ENCODE measurements at regions of chr15 and their contacts with region 1.

Region 1: DNA sequence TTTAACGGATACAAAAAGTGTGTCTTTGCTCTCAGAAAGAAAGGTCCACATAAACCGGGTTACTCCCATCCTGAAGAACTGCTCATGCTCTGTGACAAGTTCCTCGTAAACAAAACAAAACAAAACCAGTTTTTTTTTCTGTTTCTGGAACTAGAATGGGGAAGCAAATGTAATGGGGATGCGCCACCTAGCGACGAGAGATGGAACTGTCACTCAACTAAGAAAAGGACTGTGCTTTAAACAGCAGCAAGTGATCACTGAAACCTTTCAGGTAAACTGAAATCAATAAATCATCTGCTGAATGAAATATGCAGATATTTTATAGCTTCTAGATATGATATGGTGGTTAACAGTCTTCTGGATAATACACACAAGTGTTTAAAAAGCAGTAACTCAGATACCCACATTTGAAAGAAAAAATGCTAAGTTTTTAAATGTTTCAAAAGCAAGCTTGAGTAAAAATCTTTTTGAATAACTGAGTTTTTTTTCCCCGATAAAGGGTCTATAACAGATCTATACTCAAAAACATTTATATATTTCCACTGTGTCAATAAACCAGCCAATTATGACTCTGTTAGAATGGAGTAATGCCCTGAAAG is 10.9 kb downstream of the TM2D3 start:
- DNase-seq: peak; percentile 70 to 82
- ATAC-seq: peak; percentile 86
- H3K4me3 ChIP-seq: no peak overlapping the region
- H3K27ac ChIP-seq: no peak overlapping the region
- H3K4me1 ChIP-seq: no peaks in the 10 kb centered on the region
- H3K27me3 ChIP-seq: no peaks in the 10 kb centered on the region

Region 2: DNA sequence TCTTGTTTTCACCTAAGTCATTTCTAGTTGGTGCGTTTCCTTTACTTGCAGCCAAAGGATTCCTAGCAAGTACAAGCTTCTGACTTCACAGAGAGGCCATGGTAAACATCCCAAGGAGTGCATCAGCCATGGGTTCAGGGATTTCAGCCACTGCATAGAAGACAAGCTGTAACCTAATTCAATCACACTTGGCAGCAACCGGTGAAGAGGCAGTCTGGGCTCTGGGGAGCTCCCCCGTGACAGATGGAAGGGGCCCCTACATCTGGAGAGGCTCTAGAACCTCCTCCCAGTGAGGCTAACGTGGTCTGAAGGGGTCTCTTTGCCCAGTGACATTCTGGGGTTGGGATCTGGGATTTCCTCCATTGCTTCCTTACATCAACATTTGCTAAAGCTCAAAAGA is 337.9 kb before region 1 on chr15:
- intact Hi-C with region 1: loop called in 1 of 2 experiments (anchors 5 kb)
- DNase-seq: no peak
- ATAC-seq: no peak
- H3K4me3 ChIP-seq: no peak overlapping the region
- H3K27ac ChIP-seq: no peak overlapping the region
- H3K4me1 ChIP-seq: no peaks in the 10 kb centered on the region
- H3K27me3 ChIP-seq: no peaks in the 10 kb centered on the region

Region 3: GRCh38 chr15:101568309-101568708 is 73.0 kb before region 1 on chr15:
- intact Hi-C with region 1: no loop called
- DNase-seq: no peak
- ATAC-seq: no peak
- H3K4me3 ChIP-seq: no peak overlapping the region
- H3K27ac ChIP-seq: no peak overlapping the region
- H3K4me1 ChIP-seq: no peaks in the 10 kb centered on the region
- H3K27me3 ChIP-seq: no peaks in the 10 kb centered on the region

Measured in aorta (tissue), 5 donors.